MCF 10A (cell line): ENCODE measurements at regions of chr6 and their contacts with region 1.

Region 1: GRCh38 chr6:35297601-35298481 is at the start of gene DEF6:
- DNase-seq: peak; percentile 91
- H3K4me3 Mint-ChIP-seq: peak within 1 kb of the TSS; percentile 69
- H3K27ac Mint-ChIP-seq: peak within 1 kb of the TSS; percentile 23
- H3K4me1 Mint-ChIP-seq: peaks cover 14% of the 10 kb centered on the region
- H3K27me3 Mint-ChIP-seq: no peaks in the 10 kb centered on the region
- CTCF ChIP-seq: peak; percentile 85
- total RNA-seq, gene DEF6: 17.8 and 23.1 TPM in 2 replicates

Region 2: GRCh38 chr6:35165630-35166071 is 132.2 kb before region 1 on chr6:
- CTCF ChIA-PET with region 1: no interaction called
- POLR2A ChIA-PET with region 1: no interaction called
- intact Hi-C with region 1: no loop called
- DNase-seq: peak; percentile 34
- H3K4me3 Mint-ChIP-seq: no peak overlapping the region
- H3K27ac Mint-ChIP-seq: peak overlapping the region; percentile 80
- H3K4me1 Mint-ChIP-seq: peaks cover 8% of the 10 kb centered on the region
- H3K27me3 Mint-ChIP-seq: no peaks in the 10 kb centered on the region
- CTCF ChIP-seq: no peak

Region 3: DNA sequence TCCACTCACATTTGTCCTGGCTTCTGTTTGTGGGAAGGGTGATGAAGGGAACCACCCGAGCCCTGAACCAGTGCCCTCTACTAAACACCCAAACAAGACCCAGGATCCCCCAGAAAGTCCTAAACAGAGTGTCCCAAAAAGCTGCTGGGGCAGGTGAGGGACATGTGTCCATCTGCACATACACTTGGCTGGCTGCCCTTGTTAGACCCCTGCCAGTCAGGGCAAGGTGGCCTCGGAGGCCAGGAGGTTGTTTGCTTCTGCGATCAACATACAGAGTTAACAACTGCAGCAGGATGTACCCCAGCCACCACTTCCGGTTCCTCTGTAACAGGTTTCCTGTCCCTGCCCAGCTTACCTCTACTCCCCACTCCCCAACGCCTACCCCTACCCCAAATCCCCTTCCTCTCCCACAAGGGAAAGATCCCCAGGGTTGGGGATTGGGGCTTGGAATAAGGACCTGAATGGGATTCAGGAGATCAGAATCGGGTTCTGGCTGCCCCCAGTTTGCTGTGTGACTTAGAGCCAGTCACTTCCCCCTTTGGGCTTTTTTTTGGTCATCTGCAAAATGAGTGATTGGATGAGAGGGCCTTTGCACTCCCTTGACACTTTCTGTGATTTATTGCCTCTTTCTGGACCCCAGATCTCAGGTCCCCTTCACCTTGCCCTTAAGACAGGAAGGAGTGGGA is 13.7 kb after region 1 on chr6:
- CTCF ChIA-PET with region 1: interaction called, 16 read pairs
- POLR2A ChIA-PET with region 1: interaction called, 5 read pairs
- intact Hi-C with region 1: no loop called
- DNase-seq: no peak
- H3K4me3 Mint-ChIP-seq: no peak overlapping the region
- H3K27ac Mint-ChIP-seq: no peak overlapping the region
- H3K4me1 Mint-ChIP-seq: no peaks in the 10 kb centered on the region
- H3K27me3 Mint-ChIP-seq: no peaks in the 10 kb centered on the region
- CTCF ChIP-seq: no peak

Region 4: GRCh38 chr6:35342258-35343091 is 44.6 kb after region 1 on chr6 and contains the start of gene PPARD:
- CTCF ChIA-PET with region 1: interaction called, 10 read pairs
- POLR2A ChIA-PET with region 1: interaction called, 5 read pairs
- intact Hi-C with region 1: loop called (anchors 5 kb)
- DNase-seq: peak; percentile 97
- H3K4me3 Mint-ChIP-seq: peak within 1 kb of the TSS; percentile 82
- H3K27ac Mint-ChIP-seq: peak within 1 kb of the TSS; percentile 95
- H3K4me1 Mint-ChIP-seq: peaks cover 18% of the 10 kb centered on the region
- H3K27me3 Mint-ChIP-seq: peaks cover 12% of the 10 kb centered on the region
- CTCF ChIP-seq: peak; percentile 95
- total RNA-seq, gene PPARD: 13.8 and 16.8 TPM in 2 replicates

Region 5: GRCh38 chr6:35468181-35468979 is 170.5 kb after region 1 on chr6 and contains the start of gene RPL10A:
- CTCF ChIA-PET with region 1: interaction called, 22 read pairs
- POLR2A ChIA-PET with region 1: interaction called, 11 read pairs
- intact Hi-C with region 1: loop called (anchors 1 kb)
- DNase-seq: peak; percentile 97
- H3K4me3 Mint-ChIP-seq: peak within 1 kb of the TSS; percentile 95
- H3K27ac Mint-ChIP-seq: peak within 1 kb of the TSS; percentile 97
- H3K4me1 Mint-ChIP-seq: peaks cover 13% of the 10 kb centered on the region
- H3K27me3 Mint-ChIP-seq: no peaks in the 10 kb centered on the region
- CTCF ChIP-seq: peak; percentile 92
- total RNA-seq, gene RPL10A: 2,403 and 2,457 TPM in 2 replicates

Region 6: DNA sequence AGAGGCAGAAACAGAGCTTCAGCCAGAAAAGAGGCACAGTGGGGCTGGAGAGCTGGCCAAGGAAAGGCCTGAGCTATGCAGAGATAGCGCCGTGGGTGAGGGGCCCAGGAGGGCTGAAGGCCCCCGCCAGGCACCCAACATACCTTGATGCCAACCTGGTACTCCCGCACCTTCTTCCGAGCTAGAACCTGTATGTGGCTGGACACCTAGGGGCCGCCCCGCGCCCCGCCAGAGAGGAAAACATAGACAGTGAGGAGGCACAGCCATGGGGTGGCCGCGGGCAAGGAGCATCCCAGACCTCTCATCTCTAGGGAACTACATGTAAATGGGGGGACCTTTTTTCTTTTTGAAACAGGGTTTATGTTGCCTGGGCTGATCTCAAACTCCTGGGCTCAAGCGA is 182.3 kb after region 1 on chr6:
- CTCF ChIA-PET with region 1: no interaction called
- POLR2A ChIA-PET with region 1: no interaction called
- intact Hi-C with region 1: no loop called
- DNase-seq: no peak
- H3K4me3 Mint-ChIP-seq: no peak overlapping the region
- H3K27ac Mint-ChIP-seq: no peak overlapping the region
- H3K4me1 Mint-ChIP-seq: peaks cover 8% of the 10 kb centered on the region
- H3K27me3 Mint-ChIP-seq: no peaks in the 10 kb centered on the region
- CTCF ChIP-seq: no peak

Region 7: GRCh38 chr6:35973670-35974222 is 675.9 kb after region 1 on chr6:
- CTCF ChIA-PET with region 1: no interaction called
- POLR2A ChIA-PET with region 1: no interaction called
- intact Hi-C with region 1: no loop called
- DNase-seq: peak; percentile 41
- H3K4me3 Mint-ChIP-seq: no peak overlapping the region
- H3K27ac Mint-ChIP-seq: no peak overlapping the region
- H3K4me1 Mint-ChIP-seq: peaks cover 5% of the 10 kb centered on the region
- H3K27me3 Mint-ChIP-seq: no peaks in the 10 kb centered on the region
- CTCF ChIP-seq: no peak